Posterior vena cava (tissue), 2 donors: ENCODE measurements at regions of chr6 and their contacts with region 1.

Region 1: DNA sequence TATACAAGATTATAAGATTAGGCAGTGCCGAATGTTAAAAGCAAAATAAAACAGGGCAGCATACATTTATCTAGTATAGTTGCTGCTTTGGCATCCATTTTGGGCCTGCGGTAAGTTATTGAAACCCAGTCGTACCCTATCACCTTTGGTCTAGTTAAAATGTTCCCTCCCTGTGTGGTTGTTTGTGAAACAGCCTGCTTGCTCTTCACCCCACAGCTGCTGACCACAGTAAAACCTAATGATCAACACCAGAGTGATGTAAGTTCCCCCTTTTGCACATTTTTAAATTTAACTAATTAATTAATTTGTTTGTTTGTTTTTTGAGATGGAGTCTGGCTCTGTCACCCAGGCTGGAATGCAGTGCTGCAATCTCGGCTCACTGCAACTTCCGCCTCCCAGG is 50.3 kb upstream of the TXNDC5 start:
- DNase-seq: no peak

Region 2: GRCh38 chr6:7446619-7447325 is 514.1 kb before region 1 on chr6:
- intact Hi-C with region 1: loop called in 1 of 2 experiments (anchors 5 kb)
- DNase-seq: no peak